PC-9 (cell line): ENCODE measurements at regions of chr16 and their contacts with region 1.

Region 1: DNA sequence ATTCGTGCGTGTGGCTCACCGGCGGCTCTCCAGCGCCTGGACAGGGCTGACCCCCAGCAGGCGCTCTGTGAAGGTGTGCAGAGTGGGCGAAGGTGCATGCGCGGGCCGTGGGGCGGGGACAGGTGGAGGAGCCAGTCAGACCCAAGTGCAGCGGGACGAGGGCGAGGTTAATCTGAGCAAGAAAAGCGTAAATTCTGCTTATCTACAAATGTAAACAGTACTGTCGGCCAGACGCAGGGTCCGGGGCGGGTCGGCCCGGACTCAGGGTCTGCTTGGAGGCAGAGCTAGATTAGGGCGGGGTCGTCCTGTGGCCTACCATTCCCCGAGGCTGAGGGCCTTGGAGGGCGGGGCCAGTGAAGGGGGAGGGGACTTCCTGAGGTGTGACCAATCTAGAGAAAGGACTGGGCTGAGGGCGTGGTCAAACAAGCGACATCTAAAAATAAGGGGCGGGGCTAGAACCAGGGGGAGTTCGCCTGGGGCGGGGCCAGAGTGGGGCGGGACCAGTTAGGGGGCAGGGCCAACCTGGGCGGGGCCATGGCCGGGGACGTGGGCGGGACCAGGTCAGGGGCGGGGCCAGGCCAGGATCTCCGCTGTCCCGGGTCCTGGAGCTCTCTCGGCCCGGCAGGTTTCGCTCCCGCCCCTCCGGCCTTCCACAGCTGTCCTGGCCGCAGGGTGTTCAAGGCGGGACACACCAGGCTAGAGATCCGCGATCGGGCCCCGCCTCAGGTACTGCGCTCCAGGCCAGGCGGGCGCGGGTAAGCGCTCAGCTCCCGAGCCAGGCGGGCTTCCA is at the start of gene SEC14L5:
- DNase-seq: peak; percentile 88 to 99
- H3K4me3 ChIP-seq: peak within 1 kb of the TSS; percentile 69
- H3K27ac ChIP-seq: peak within 1 kb of the TSS; percentile 17; the same call in 1 of the 2 replicates
- H3K4me1 ChIP-seq: peaks cover 10% of the 10 kb centered on the region
- H3K27me3 ChIP-seq: peaks cover 26% of the 10 kb centered on the region
- CTCF ChIP-seq: no peak
- total RNA-seq, gene SEC14L5: 1.1 and 1.8 TPM in 2 replicates

Region 2: DNA sequence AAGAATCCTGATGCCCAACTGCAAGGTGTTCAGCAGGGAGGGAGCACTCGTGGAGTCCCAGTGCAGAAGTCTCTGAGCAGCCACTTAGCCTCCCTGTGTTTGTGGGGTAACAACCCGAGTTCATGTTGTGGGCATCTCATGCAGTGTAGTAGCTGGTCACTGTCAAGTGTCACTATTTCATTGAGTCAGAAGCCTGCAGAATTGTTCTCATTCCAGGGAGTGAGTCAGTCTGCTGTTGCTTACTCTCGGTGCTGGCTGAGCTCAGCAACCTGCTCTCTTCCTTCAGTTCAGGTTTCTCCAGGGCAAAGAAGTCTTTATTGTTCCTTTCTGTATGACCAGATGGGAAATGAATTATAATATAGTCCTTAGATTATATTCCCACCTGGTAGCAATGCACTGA is 457.6 kb before region 1 on chr16:
- CTCF ChIA-PET with region 1: no interaction called
- POLR2A ChIA-PET with region 1: no interaction called
- intact Hi-C with region 1: loop called (anchors 5 kb)
- DNase-seq: peak; percentile 56 to 83
- H3K4me3 ChIP-seq: no peak overlapping the region
- H3K27ac ChIP-seq: peak overlapping the region; percentile 67
- H3K4me1 ChIP-seq: peaks cover 58% of the 10 kb centered on the region
- H3K27me3 ChIP-seq: no peaks in the 10 kb centered on the region
- CTCF ChIP-seq: no peak

Region 3: GRCh38 chr16:4713663-4714501 is 244.0 kb before region 1 on chr16:
- CTCF ChIA-PET with region 1: no interaction called
- POLR2A ChIA-PET with region 1: no interaction called
- intact Hi-C with region 1: loop called (anchors 1 kb)
- DNase-seq: no peak
- H3K4me3 ChIP-seq: no peak overlapping the region
- H3K27ac ChIP-seq: no peak overlapping the region
- H3K4me1 ChIP-seq: no peaks in the 10 kb centered on the region
- H3K27me3 ChIP-seq: no peaks in the 10 kb centered on the region
- CTCF ChIP-seq: no peak

Region 4: GRCh38 chr16:4802659-4803287 is 155.1 kb before region 1 on chr16:
- CTCF ChIA-PET with region 1: interaction called, 8 read pairs
- POLR2A ChIA-PET with region 1: interaction called, 3 read pairs
- intact Hi-C with region 1: loop called (anchors 2 kb)
- DNase-seq: peak; percentile 82 to 96
- H3K4me3 ChIP-seq: peak overlapping the region; percentile 81
- H3K27ac ChIP-seq: peak overlapping the region; percentile 55
- H3K4me1 ChIP-seq: peaks cover 14% of the 10 kb centered on the region
- H3K27me3 ChIP-seq: no peaks in the 10 kb centered on the region
- CTCF ChIP-seq: 0 out of 2 replicates have a peak, but pooled peaks have one; percentile 25

Region 5: GRCh38 chr16:4839942-4840341 is 118.0 kb before region 1 on chr16:
- CTCF ChIA-PET with region 1: no interaction called
- POLR2A ChIA-PET with region 1: no interaction called
- intact Hi-C with region 1: no loop called
- DNase-seq: no peak
- H3K4me3 ChIP-seq: no peak overlapping the region
- H3K27ac ChIP-seq: no peak overlapping the region
- H3K4me1 ChIP-seq: no peaks in the 10 kb centered on the region
- H3K27me3 ChIP-seq: no peaks in the 10 kb centered on the region
- CTCF ChIP-seq: no peak

Region 6: GRCh38 chr16:4915226-4915761 is 42.6 kb before region 1 on chr16:
- CTCF ChIA-PET with region 1: interaction called, 3 read pairs
- POLR2A ChIA-PET with region 1: interaction called, 19 read pairs
- intact Hi-C with region 1: loop called (anchors 5 kb)
- DNase-seq: peak; percentile 76 to 95
- H3K4me3 ChIP-seq: no peak overlapping the region
- H3K27ac ChIP-seq: peak overlapping the region; percentile 89
- H3K4me1 ChIP-seq: peaks cover 76% of the 10 kb centered on the region
- H3K27me3 ChIP-seq: no peaks in the 10 kb centered on the region
- CTCF ChIP-seq: no peak

Region 7: DNA sequence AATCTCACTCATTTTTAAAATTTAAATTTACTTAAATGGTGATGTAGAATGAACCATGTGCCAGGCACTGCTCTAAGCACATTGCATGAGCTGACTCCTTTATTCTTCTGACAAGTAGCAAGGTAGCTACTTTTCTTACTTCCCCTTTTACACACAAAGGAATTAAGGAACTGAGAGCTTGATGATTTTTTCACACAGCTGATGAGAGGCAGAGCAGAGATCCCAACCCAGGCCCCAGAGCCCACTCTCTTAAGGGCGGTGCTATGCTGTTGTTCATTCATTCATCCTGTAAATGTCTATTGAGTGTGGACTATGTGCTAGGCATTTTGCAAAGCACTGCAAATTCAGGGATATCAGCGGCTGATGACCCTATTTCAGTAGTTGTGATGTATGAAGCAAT is 18.2 kb after region 1 on chr16:
- CTCF ChIA-PET with region 1: no interaction called
- POLR2A ChIA-PET with region 1: no interaction called
- intact Hi-C with region 1: no loop called
- DNase-seq: no peak
- H3K4me3 ChIP-seq: no peak overlapping the region
- H3K27ac ChIP-seq: no peak overlapping the region
- H3K4me1 ChIP-seq: no peaks in the 10 kb centered on the region
- H3K27me3 ChIP-seq: peaks cover 60% of the 10 kb centered on the region
- CTCF ChIP-seq: no peak

Region 8: DNA sequence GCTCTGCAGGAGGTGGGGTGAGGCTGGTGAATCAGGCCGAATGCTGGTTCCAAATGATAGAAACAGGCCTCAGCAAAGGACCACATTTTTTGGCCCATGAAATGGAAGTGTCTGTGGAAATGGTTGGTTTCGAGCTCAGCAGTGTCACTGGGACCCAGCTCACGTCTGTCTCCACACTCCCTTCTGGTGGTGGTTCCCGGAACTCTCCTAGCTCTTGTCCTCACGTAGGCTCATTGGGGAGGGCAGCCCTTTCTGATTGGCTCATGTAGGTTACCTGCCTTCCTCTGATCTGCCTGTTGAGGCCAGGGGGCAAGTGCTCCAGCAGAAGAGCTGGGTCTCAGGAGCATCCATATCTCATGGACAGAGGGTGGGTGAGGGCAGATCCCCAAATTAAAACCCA is 117.7 kb after region 1 on chr16:
- CTCF ChIA-PET with region 1: no interaction called
- POLR2A ChIA-PET with region 1: no interaction called
- intact Hi-C with region 1: loop called (anchors 5 kb)
- DNase-seq: no peak
- H3K4me3 ChIP-seq: no peak overlapping the region
- H3K27ac ChIP-seq: no peak overlapping the region
- H3K4me1 ChIP-seq: peaks cover 24% of the 10 kb centered on the region
- H3K27me3 ChIP-seq: no peaks in the 10 kb centered on the region
- CTCF ChIP-seq: no peak